HEK293 (cell line): ENCODE measurements at regions of chr5 and their contacts with region 1.

Region 1: DNA sequence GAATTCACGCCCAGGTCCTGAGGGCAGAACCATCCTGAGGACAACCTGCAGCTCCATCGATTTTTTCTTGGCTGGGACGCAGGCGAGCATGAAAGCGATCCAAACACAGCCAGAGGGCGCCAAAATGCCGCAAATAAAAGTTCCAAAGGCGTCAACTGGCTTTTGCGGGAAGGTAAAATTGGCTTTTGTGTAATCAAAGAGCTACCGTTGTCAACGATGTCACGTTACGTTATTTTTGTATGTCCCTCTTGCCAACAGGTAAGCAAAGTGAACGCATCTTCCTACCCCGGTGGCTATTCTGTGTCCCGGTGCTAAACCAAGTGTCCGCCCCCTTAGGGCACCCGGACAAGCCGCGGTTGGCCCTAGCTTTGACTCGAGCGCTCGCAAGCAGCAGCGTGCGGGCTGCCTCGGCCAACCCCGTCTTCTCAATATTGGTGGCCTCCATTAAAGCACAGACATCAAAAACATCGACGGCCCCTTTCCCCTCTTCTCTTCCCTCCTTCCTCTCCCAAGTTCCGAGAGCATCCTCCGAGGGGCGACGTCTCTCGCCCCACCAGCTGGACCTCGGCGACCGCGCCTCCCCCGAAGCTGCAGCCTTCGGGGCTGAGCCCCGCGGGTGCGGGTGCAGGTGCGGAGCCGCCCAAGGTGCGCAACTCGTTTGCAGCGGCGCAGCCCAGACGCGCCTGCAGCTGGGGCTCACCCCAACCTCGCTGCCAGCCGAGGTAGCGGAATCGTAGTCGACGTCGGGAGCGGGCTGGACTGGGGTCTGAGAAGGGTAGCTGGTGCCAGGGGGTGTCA is 1.1 kb upstream of the BASP1 start:
- H3K4me3 ChIP-seq: peak overlapping the region; percentile 31
- H3K27ac ChIP-seq: peak overlapping the region; percentile 90
- H3K4me1 ChIP-seq: peaks cover 18% of the 10 kb centered on the region
- CTCF ChIP-seq: peak; percentile 94

Region 2: GRCh38 chr5:17081142-17081541 is 135.2 kb before region 1 on chr5:
- CTCF ChIA-PET with region 1: no interaction called
- POLR2A ChIA-PET with region 1: no interaction called
- H3K4me3 ChIP-seq: no peak overlapping the region
- H3K27ac ChIP-seq: no peak overlapping the region
- H3K4me1 ChIP-seq: no peaks in the 10 kb centered on the region
- CTCF ChIP-seq: no peak

Region 3: DNA sequence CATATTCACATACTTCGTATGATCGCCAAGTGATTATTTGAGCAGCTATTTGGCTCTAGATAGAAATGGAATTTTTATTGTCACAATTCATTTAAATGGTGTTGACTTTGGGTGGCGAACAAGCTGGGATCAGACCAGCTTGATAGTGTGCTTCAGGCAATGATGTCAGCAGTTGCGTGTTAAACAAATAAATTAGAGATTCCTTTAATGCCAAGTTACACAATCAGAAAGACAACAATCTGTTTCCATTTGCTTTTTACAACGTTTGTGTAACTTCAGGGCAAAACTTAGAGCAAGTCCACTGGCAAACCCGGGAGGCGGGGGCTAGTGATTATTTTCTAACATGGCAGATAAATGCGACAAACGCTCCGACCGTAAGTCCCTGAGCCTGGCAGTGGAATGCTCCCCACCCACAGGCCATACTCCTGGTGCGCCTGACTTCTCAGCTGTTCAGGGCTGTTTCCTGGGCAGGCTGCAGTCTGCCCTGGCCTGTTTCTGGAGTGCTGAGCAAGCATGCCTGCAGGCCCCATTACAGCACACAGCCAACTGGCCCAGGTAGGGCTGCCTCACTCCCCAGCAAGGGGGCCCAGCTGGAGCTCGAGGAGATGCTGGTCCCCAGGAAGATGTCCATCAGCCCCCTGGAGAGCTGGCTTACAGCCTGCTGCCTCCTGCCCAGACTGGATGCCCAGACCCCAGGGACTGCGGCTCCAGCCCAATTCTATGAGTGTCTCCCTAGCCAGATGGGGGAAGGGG is 89.8 kb after region 1 on chr5:
- CTCF ChIA-PET with region 1: interaction called, 16 read pairs
- POLR2A ChIA-PET with region 1: interaction called, 14 read pairs
- H3K4me3 ChIP-seq: no peak overlapping the region; the same call in 1 of the 2 replicates
- H3K27ac ChIP-seq: peak overlapping the region; percentile 85
- H3K4me1 ChIP-seq: peaks cover 32% of the 10 kb centered on the region
- CTCF ChIP-seq: peak; percentile 31; the same call in 1 of the 2 replicates

Region 4: DNA sequence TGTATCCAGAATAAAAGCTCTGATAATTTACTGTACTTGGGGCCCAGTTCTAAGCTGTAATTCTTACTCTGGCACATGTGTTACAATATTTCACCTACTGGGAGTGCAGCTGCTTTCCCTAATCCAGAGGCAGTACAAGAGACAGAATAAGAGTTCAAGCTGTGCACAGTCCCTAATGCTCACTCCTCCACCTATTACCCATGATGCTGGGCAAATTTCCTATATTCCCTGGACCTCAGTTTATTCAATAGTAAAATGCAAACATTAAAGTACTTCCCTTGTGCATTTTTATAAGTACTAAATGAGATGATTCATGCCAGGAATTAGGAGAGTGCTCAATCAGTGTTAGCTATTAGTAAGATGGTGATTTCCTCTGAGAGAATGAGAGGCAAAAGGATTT is 253.7 kb after region 1 on chr5:
- CTCF ChIA-PET with region 1: interaction called, 10 read pairs
- POLR2A ChIA-PET with region 1: no interaction called
- H3K4me3 ChIP-seq: no peak overlapping the region
- H3K27ac ChIP-seq: no peak overlapping the region
- H3K4me1 ChIP-seq: no peaks in the 10 kb centered on the region
- CTCF ChIP-seq: no peak

Region 5: DNA sequence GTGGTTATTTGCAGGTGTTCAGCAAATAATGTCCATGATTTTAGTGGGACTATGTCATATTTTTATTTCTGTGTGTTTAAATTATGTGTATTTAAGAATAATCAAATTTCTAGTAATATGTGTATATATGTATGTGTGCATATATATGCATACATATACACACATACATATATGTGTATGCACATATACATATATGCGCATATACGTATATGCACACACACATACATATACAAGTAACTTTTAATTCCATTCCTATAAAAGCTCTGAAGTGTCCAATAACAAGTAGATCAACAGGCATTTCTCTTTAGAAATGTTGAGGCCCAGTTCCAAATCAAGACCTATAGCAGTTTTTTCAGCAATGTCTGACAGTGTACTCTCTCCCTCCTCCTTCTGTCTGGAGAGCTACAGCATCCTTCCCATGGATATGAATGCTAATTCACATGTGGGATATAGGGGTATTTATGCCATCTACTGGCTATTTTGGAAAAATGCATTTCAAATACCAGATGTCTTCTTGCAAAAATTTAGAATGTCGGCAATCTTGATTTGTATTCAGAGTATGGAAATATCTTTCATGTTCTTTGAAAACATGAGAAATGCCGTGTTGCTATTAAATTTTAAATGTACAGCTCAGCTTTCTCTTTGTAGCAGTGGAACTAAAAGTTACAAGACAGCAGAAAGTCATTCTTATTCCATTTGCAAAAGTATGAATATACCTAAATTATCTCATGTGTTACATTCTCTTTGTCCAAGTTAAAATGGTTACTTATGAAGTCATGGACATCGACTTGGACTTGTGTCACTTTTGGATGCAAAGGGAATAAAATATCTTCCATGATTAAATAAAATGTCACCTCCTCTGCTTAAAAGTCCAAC is 1065.5 kb after region 1 on chr5:
- CTCF ChIA-PET with region 1: interaction called, 27 read pairs
- POLR2A ChIA-PET with region 1: interaction called, 4 read pairs
- H3K4me3 ChIP-seq: no peak overlapping the region
- H3K27ac ChIP-seq: no peak overlapping the region
- H3K4me1 ChIP-seq: no peaks in the 10 kb centered on the region
- CTCF ChIP-seq: 0 out of 2 replicates have a peak, but pooled peaks have one; percentile 21

Region 6: GRCh38 chr5:18314192-18314778 is 1097.9 kb after region 1 on chr5:
- CTCF ChIA-PET with region 1: interaction called, 22 read pairs
- POLR2A ChIA-PET with region 1: interaction called, 6 read pairs
- H3K4me3 ChIP-seq: no peak overlapping the region
- H3K27ac ChIP-seq: no peak overlapping the region
- H3K4me1 ChIP-seq: no peaks in the 10 kb centered on the region
- CTCF ChIP-seq: no peak